Mammary epithelial cell (primary cell): ENCODE measurements at regions of chr14 and their contacts with region 1.

Region 1: GRCh38 chr14:99793213-99794150 is at the start of gene EML1:
- DNase-seq: peak; percentile 52
- H3K4me3 ChIP-seq: peak within 1 kb of the TSS; percentile 44 to 59 (median 50)
- H3K27ac ChIP-seq: no peak within 1 kb of the TSS
- H3K4me1 ChIP-seq: peaks cover 4% of the 10 kb centered on the region
- H3K27me3 ChIP-seq: peaks cover 12% of the 10 kb centered on the region
- CTCF ChIP-seq: no peak
- total RNA-seq, gene EML1: 2.8 to 4.2 TPM

Region 2: DNA sequence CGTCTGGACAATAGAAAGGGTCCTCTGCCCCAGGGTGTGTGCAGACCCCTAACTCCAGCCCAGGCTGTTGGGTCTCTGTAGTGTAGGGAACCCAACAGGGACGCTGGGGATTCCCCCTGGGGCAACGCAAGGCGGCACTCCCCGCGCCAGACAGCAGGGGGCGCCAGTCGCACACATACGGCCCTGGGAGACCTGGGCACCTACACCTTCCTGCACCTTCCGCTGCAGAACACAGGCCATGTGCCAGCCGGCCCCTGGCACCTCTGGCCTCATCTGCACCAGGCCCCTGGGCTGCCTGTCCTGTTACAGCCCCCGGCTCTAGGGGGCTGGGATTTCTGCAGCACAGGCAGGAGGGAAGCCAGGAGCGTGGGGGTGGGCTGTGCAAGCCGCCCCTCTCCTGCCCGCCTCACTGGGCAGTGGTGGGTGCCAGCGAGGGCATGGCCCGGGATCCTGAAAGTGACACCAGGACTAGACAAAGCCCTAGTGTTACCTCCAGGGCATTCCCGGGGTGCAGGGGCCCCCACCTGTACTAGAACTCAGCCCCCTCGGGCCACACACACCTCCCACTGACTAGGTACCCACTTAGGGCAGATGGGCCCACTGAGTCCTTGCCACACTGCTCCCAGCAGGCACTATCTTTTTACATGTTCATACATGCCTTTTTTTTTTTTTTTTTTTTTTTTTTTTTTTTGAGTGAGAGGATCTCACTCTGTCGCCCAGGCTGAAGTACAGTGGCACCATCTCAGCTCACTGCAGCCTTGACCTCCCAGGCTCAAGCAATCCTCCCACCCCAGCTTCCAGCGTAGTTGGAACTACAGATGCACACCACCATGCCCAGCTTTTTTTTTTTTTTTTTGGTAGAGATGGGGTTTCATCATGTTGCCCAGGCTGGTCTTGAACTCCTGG is 274.8 kb before region 1 on chr14:
- CTCF ChIA-PET with region 1: no interaction called
- dilution Hi-C with region 1: no loop called
- in situ Hi-C with region 1: no loop called
- intact Hi-C with region 1: loop called (anchors 5 kb)
- DNase-seq: peak; percentile 58
- H3K4me3 ChIP-seq: no peak overlapping the region
- H3K27ac ChIP-seq: no peak overlapping the region
- H3K4me1 ChIP-seq: peaks cover 4% of the 10 kb centered on the region
- H3K27me3 ChIP-seq: no peaks in the 10 kb centered on the region
- CTCF ChIP-seq: peak; percentile 95 to 96

Region 3: DNA sequence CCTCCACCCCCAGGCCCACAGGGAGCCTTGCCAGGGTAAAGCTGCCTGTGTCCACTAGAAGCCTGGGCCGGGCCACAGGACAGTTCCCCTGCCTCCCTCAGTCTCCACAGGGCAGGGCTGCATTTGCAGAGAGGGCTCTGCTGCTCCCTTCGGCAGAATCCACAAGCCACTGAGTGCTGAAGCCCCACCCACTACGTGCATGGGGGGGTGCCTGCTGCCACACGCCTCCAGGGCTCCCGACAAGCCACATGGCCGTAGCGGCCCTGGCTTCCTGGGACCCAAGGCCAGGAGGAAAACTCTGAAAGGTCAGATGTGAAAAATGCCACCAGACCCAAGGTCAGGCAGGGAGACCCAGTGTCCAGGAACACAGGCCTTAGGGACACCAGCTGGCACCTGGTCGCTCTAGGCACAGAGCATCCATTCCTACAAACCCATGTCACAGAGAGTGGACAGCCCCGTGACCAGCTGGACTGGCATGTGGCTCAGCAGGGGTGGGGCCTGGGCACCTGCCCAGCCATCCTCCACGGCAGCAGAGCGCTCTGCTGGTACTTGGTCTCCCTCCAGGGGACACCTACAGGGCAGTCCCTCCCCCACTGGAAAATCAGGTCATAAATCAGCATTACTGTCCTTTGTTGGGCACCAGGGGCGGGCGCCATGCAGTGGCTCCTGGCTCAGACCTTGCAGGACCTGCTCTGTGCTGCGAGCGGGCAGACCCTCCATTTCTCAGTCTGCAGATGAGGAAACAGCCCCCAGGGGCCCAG is 232.4 kb before region 1 on chr14:
- CTCF ChIA-PET with region 1: no interaction called
- dilution Hi-C with region 1: no loop called
- in situ Hi-C with region 1: no loop called
- intact Hi-C with region 1: no loop called
- DNase-seq: no peak
- H3K4me3 ChIP-seq: no peak overlapping the region
- H3K27ac ChIP-seq: no peak overlapping the region
- H3K4me1 ChIP-seq: peaks cover 27% of the 10 kb centered on the region
- H3K27me3 ChIP-seq: no peaks in the 10 kb centered on the region
- CTCF ChIP-seq: no peak

Region 4: GRCh38 chr14:99699861-99700260 is 93.6 kb before region 1 on chr14:
- CTCF ChIA-PET with region 1: no interaction called
- dilution Hi-C with region 1: loop called (anchors 5 kb)
- in situ Hi-C with region 1: no loop called
- intact Hi-C with region 1: no loop called
- DNase-seq: no peak
- H3K4me3 ChIP-seq: no peak overlapping the region
- H3K27ac ChIP-seq: no peak overlapping the region
- H3K4me1 ChIP-seq: no peaks in the 10 kb centered on the region
- H3K27me3 ChIP-seq: no peaks in the 10 kb centered on the region
- CTCF ChIP-seq: no peak

Region 5: DNA sequence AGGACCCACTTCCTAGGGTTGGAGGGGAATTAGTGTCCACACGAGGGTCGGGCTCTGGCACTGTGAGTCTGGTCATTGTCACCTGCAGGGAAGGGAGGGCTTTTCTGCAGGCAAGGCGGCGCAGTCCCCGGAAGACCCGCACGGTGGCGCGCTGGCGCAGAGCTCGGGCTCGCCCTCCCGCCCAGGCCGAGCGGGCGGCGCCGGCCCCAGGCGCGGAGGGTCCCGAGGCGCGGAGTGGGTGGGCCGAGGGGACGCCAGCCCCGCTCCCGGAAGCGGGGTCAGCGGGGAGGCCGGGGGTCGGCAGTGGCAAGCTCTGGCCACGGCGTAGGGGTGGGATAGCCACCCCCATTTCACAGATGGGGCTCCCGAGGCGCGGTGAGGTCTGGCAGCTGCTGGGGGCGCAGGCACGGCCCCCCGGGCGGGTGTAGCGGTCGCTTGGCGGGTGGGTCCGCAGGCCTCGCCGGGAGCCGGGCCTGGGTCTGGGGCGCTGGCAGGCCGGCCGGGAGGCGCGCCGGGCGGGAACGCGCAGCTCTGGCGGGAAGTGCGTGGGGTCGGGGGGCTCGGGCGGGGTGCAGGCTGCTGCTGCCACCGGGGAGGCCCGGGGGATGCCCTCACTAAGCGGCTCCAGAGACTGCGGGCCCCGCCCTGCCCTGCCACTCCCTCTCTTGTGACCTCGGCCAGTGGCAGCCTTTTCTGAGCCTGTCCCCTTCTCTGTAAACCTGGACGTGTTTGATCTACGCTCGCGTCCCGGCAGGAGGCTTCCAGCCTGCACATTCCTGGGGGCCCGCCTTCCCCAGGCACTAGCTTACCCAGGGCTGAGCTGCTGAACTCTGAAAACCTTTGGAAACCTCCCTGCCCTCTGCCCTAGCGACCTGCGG is 63.3 kb before region 1 on chr14:
- CTCF ChIA-PET with region 1: interaction called, 4 read pairs
- dilution Hi-C with region 1: no loop called
- in situ Hi-C with region 1: no loop called
- intact Hi-C with region 1: loop called (anchors 2 kb)
- DNase-seq: no peak
- H3K4me3 ChIP-seq: no peak overlapping the region
- H3K27ac ChIP-seq: no peak overlapping the region
- H3K4me1 ChIP-seq: peaks cover 6% of the 10 kb centered on the region
- H3K27me3 ChIP-seq: peaks cover 5% of the 10 kb centered on the region
- CTCF ChIP-seq: peak; percentile 70 to 75

Region 6: GRCh38 chr14:99755629-99756603 is 37.6 kb before region 1 on chr14:
- CTCF ChIA-PET with region 1: no interaction called
- dilution Hi-C with region 1: loop called (anchors 5 kb)
- in situ Hi-C with region 1: no loop called
- intact Hi-C with region 1: loop called (anchors 1 kb)
- DNase-seq: peak; percentile 56
- H3K4me3 ChIP-seq: no peak overlapping the region
- H3K27ac ChIP-seq: no peak overlapping the region
- H3K4me1 ChIP-seq: peaks cover 24% of the 10 kb centered on the region
- H3K27me3 ChIP-seq: no peaks in the 10 kb centered on the region
- CTCF ChIP-seq: no peak